BJ (cell line): ENCODE measurements at regions of chr17 and their contacts with region 1.

Region 1: DNA sequence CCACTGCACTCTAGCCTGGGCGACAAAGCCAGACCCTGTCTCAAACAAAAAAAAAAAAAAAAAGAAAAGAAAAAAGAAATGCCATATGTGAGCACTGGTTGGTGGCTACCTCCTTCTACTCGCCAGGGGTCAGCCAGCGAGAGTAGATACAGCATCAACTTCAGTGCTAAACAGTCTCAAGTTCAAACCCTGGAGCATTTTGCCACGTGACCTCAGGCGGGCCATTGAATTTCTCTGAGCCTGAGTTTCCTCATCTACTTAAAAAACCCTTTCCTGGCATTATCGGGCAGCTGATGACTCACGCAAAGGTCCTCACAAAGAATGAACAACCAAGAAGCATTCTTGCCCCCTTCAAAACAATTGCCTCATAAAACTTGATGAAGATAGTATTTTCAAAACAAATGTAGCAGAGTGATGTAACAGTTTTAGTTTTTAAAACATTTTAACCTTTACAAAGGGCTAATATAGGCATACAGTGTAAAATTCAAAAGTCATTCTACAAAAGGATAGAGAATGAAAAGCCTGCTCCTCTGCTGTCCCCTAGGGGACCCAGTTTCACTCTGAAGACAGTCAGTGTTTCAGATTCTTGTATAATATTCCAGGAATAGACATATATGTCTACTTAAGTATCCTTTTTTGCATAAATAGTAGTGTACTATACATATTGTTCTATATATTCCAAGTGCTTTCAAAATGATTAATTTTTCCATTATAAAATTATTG is 28.4 kb downstream of the DNAH2 start:
- DNase-seq: peak; percentile 52
- H3K4me3 ChIP-seq: no peak overlapping the region
- H3K27me3 ChIP-seq: no peaks in the 10 kb centered on the region
- CTCF ChIP-seq: 0 out of 2 replicates have a peak, but pooled peaks have one; percentile 13

Region 2: GRCh38 chr17:7767405-7768021 is 21.6 kb after region 1 on chr17:
- CTCF ChIA-PET with region 1: interaction called, 16 read pairs
- POLR2A ChIA-PET with region 1: no interaction called
- DNase-seq: no peak
- H3K4me3 ChIP-seq: no peak overlapping the region
- H3K27me3 ChIP-seq: no peaks in the 10 kb centered on the region
- CTCF ChIP-seq: no peak

Region 3: DNA sequence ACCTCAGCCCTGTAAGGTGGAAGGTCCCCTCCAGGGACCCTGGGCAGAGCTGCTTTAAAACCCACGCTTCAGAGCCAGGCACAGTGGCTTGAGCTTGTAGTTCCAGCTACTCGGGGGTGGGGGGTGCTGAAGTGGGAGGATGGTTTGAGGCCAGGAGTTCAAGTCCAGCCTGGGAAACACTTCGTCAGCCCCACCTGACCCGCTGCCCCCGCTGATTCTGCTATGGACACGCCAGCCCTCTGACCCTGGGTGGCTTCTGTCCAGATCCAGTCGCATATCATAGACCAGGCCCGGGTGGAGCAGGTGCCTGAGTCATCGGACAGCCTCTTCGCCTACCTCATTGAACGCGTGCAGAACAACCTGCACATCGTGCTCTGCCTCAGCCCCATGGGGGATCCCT is 52.9 kb after region 1 on chr17:
- CTCF ChIA-PET with region 1: interaction called, 12 read pairs
- POLR2A ChIA-PET with region 1: no interaction called
- DNase-seq: no peak
- H3K4me3 ChIP-seq: no peak overlapping the region
- H3K27me3 ChIP-seq: peaks cover 7% of the 10 kb centered on the region; the same call in 1 of the 2 replicates
- CTCF ChIP-seq: no peak

Region 4: GRCh38 chr17:7825206-7825990 is 79.5 kb after region 1 on chr17:
- CTCF ChIA-PET with region 1: interaction called, 16 read pairs
- POLR2A ChIA-PET with region 1: no interaction called
- DNase-seq: no peak
- H3K4me3 ChIP-seq: no peak overlapping the region
- H3K27me3 ChIP-seq: peaks cover 5% of the 10 kb centered on the region
- CTCF ChIP-seq: no peak

Region 5: DNA sequence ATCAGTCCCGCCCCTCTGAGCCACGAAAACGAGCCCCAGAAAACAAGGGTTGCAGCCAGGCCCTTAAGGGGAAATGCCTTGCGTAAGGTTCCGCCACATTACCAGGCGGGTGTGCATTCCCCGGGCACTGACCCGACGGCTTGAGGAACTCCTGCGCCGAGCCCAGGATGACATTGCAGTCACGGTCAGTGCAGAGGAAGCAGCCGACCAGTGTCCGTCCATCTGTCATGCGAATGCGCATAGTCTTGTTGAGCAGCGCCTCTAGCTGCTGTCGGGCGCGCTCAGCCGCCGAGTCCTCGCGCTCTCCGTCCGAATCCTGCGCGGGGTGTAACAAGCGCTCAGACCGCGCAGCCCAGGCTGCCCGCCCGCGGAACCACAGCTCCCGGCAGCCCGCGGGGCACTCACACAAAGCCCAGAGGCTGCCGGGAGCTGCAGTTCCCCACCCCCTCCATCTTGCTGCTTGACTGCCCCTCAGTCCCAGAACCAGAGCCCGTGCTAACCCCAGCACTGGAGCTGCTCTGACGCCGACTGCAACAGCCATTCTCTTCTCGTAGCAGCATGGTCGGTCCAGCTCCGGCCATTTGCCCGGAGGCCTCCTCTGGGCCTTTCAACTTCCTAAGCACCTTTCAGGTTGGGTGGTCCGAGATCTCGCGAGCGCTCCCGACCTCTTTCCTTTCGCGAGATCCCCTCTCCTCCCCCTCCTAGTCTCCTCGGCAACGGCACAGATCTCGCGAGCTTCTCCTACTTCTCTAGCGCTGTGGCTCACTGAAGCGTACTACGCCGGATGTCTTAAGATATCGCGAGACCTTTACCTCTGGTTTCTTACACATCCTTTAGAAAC is 111.2 kb after region 1 on chr17 and contains the start of gene NAA38:
- CTCF ChIA-PET with region 1: interaction called, 23 read pairs
- POLR2A ChIA-PET with region 1: no interaction called
- DNase-seq: peak; percentile 97
- H3K4me3 ChIP-seq: peak within 1 kb of the TSS; percentile 58
- H3K27me3 ChIP-seq: no peaks in the 10 kb centered on the region
- CTCF ChIP-seq: peak; percentile 59
- polyA plus RNA-seq, gene NAA38: 74.9 and 82.7 TPM in 2 replicates